Activated naive CD4-positive, alpha-beta T cell treated with anti-CD3 and anti-CD28 coated beads for 36 hours (primary cell): ENCODE measurements at regions of chr3 and their contacts with region 1.

Region 1: GRCh38 chr3:40580494-40581091 is 55.8 kb downstream of the ZNF621 start:
- DNase-seq: peak; percentile 79
- H3K4me3 Mint-ChIP-seq: no peak overlapping the region
- H3K27ac Mint-ChIP-seq: no peak overlapping the region
- H3K4me1 Mint-ChIP-seq: no peaks in the 10 kb centered on the region
- H3K27me3 Mint-ChIP-seq: peaks cover 2% of the 10 kb centered on the region

Region 2: GRCh38 chr3:38630070-38630469 is 1950.5 kb before region 1 on chr3:
- CTCF ChIA-PET with region 1: interaction called, 12 read pairs
- intact Hi-C with region 1: no loop called
- DNase-seq: no peak
- H3K4me3 Mint-ChIP-seq: no peak overlapping the region
- H3K27ac Mint-ChIP-seq: no peak overlapping the region
- H3K4me1 Mint-ChIP-seq: no peaks in the 10 kb centered on the region
- H3K27me3 Mint-ChIP-seq: no peaks in the 10 kb centered on the region

Region 3: GRCh38 chr3:40258555-40258954 is 322.0 kb before region 1 on chr3:
- CTCF ChIA-PET with region 1: no interaction called
- intact Hi-C with region 1: no loop called
- DNase-seq: no peak
- H3K4me3 Mint-ChIP-seq: no peak overlapping the region
- H3K27ac Mint-ChIP-seq: no peak overlapping the region
- H3K4me1 Mint-ChIP-seq: no peaks in the 10 kb centered on the region
- H3K27me3 Mint-ChIP-seq: no peaks in the 10 kb centered on the region

Region 4: GRCh38 chr3:40597441-40597840 is 16.8 kb after region 1 on chr3:
- CTCF ChIA-PET with region 1: interaction called, 13 read pairs
- intact Hi-C with region 1: no loop called
- DNase-seq: no peak
- H3K4me3 Mint-ChIP-seq: no peak overlapping the region
- H3K27ac Mint-ChIP-seq: no peak overlapping the region
- H3K4me1 Mint-ChIP-seq: no peaks in the 10 kb centered on the region
- H3K27me3 Mint-ChIP-seq: peaks cover 18% of the 10 kb centered on the region

Region 5: DNA sequence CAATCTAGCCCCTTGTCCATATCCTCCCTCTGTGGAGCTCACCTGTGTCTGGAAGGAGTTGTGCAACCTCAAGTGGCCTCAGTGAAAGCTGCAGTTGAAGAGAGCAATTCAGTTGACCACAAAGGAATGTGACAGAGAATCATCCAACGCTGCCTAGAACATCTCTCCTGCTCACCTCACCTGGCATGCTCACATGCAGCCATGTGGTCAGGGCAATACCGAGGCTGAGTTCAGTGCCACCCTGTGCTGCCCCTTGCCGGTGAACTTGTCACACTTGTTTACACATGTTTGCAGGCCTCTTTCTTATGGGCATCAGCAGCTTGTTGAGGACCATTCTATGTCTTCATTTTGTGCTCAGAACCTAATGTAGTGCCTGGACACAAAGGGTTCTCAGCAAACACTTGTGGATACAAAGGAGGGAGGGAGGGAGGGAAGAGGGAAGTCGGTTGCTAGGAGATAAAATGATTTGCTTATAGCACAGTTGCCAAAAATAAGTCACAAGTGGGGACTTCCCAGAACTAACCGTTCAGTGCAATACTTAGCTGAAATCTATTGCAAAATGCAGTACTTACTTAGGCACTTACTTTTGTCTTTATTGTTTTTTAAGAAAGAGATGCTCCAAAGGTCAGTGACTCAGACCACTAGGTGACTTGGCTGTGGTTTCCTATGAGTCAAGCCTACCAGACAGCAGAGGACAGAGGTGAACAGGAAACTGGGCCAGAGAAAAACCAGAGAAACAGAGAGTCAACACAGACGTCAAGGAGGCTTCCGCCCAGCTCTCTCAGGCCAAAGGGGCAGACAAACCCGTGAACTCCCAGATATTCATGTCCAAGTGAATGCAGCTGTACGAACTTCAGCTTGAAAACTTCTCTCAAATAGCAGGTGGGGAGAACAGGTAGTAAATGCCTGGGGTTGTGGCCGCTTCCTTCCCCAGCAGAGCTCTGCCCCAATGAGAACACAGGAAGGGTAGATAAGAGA is 390.9 kb after region 1 on chr3:
- CTCF ChIA-PET with region 1: no interaction called
- intact Hi-C with region 1: loop called (anchors 10 kb)
- DNase-seq: peak; percentile 48
- H3K4me3 Mint-ChIP-seq: no peak overlapping the region
- H3K27ac Mint-ChIP-seq: peak overlapping the region; percentile 10
- H3K4me1 Mint-ChIP-seq: peaks cover 13% of the 10 kb centered on the region
- H3K27me3 Mint-ChIP-seq: peaks cover 26% of the 10 kb centered on the region

Region 6: DNA sequence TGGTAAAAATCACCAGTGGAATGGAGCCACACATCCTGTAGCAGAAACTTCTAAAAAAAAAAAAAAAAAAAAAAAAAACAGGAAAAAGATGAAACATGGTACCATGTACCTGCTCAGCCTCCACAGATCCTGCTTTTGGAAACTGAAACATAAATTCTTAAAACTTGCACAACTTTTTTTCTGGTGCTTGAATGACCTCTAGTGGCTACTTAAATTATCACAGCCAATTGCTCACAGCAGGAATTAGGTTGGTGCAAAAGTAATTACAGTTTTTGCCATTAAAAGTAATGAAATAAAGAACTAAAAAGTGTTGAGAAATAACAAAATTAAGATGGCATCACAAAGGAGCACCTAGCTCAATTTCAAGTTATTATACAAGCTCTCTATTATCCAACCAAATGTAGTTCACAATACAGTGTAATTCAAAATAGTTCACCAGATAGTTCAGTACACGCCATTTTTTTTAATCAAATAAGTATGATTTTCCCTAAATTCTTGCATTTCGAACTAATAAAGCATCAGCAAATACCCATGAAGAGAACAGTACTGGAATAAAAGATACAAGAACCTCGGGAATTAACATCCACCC is 1300.7 kb after region 1 on chr3:
- CTCF ChIA-PET with region 1: interaction called, 7 read pairs
- intact Hi-C with region 1: loop called (anchors 1 kb)
- DNase-seq: no peak
- H3K4me3 Mint-ChIP-seq: no peak overlapping the region
- H3K27ac Mint-ChIP-seq: no peak overlapping the region
- H3K4me1 Mint-ChIP-seq: no peaks in the 10 kb centered on the region
- H3K27me3 Mint-ChIP-seq: no peaks in the 10 kb centered on the region